ENCODE measurements at regions of chr11 and their contacts with region 1.

Region 1: GRCh38 chr11:17978553-17979287 is 34.1 kb downstream of the SERGEF start:
- DNase-seq: no peak
- H3K4me3 ChIP-seq: no peak overlapping the region
- H3K27ac ChIP-seq: no peak overlapping the region
- H3K4me1 ChIP-seq: peaks cover 0 to 16% (median 0%) of the 10 kb centered on the region in 3 donors
- H3K27me3 ChIP-seq: no peaks in the 10 kb centered on the region
- CTCF ChIP-seq: peak; percentile 27 to 80 (median 57)
- POLR2A ChIP-seq: no peak

Region 2: DNA sequence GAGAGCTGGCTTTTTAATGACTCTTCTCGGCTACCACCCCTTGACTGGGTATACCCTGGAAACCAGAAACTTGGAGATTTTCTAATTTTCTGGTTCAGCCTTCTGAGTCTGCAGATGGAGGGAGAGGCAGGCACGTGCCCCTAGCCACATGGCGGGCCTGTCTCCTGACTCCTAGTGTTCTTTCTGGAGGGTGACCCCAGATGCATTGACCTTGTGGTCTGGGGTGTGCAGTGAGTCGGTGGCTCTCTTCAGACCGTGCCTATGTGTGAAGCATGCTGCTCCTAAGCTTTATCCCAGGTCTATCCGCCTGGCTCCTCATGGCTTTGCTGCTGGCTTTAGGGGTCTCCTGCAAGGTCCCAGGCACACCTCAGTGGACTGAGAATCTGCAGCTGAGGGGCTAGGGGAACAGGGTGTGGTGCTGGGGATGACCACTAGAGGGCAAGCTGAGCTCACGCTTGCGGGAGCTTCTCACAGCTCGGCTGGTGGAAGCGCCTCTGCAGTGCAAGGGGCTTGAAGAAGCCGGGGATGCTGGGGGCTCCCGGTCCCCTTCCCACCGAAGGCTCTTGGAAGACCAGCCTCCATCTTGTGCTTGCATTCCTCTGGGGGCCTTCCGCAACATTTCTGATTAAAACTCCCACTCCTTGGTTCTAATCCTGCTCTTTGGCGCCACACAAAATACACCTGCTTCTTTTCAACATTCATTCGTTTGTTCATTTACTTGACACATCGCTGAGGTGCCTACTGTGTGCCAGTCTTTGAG is 379.8 kb before region 1 on chr11:
- intact Hi-C with region 1: loop called (anchors 5 kb)
- DNase-seq: no peak
- H3K4me3 ChIP-seq: no peak overlapping the region
- H3K27ac ChIP-seq: no peak overlapping the region
- H3K4me1 ChIP-seq: no peaks in the 10 kb centered on the region
- H3K27me3 ChIP-seq: peaks cover 0 to 42% (median 0%) of the 10 kb centered on the region in 4 donors
- CTCF ChIP-seq: peak; percentile 70 to 91 (median 80)
- POLR2A ChIP-seq: no peak

Region 3: GRCh38 chr11:17730608-17731462 is 247.9 kb before region 1 on chr11:
- intact Hi-C with region 1: loop called (anchors 5 kb)
- DNase-seq: no peak
- H3K4me3 ChIP-seq: no peak overlapping the region
- H3K27ac ChIP-seq: no peak overlapping the region
- H3K4me1 ChIP-seq: peaks cover 9 to 27% (median 17%) of the 10 kb centered on the region in 3 donors
- H3K27me3 ChIP-seq: peaks cover 2 to 67% (median 4%) of the 10 kb centered on the region in 4 donors
- CTCF ChIP-seq: peak; percentile 61 to 89 (median 81)
- POLR2A ChIP-seq: no peak

Region 4: DNA sequence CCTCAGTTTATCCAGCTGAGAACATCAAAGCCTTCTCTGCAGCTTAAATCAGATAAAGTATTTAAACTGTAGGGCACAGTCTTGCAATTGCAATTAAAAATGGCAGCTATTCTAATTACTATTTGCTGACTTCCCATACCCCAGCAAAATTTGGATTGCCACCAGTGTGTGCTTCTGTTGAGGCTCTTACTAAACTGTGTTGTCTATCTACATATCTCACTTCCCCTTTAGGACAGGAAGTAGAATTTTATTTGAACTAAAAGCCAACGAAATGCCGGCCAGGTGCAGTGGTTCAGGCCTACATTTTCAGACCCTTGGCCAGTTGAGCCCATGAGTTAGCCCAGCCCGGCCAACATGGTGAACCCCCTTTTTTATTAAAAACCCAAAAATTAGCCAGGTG is 250.8 kb after region 1 on chr11:
- intact Hi-C with region 1: no loop called
- DNase-seq: no peak
- H3K4me3 ChIP-seq: no peak overlapping the region
- H3K27ac ChIP-seq: no peak overlapping the region
- H3K4me1 ChIP-seq: no peaks in the 10 kb centered on the region
- H3K27me3 ChIP-seq: no peaks in the 10 kb centered on the region
- CTCF ChIP-seq: no peak
- POLR2A ChIP-seq: no peak

Region 5: DNA sequence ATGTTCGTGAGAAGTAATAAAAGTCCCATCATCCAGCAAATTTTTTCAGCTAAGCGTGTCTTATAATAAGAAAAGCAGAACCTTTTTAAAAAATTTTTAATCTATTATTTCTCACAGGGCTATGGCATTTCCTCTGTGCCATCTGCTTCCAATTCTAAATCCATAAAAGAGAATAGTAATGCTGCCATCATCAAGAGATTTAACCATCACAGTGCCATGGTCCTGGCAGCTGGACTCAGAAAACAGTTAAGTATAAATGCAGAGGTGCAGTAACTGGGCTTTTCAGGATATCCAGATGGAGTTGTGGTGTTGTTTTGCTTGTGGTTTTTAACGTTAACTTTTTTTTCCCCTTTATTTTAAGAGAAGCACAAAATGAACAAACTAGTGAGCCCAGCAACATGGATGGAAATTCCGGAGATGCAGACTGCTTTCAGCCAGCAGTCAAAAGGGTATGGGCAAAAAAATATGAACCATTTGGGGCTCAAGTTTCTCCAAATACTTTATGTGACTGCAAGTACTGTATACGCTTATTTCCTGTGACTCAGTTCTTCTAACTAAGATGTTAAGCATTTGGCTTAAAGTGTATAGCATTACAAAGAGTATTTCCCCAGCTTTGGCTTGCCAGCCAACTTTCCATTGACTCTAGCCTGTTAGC is 368.9 kb after region 1 on chr11:
- intact Hi-C with region 1: no loop called
- DNase-seq: no peak
- H3K4me3 ChIP-seq: no peak overlapping the region
- H3K27ac ChIP-seq: no peak overlapping the region
- H3K4me1 ChIP-seq: no peaks in the 10 kb centered on the region
- H3K27me3 ChIP-seq: no peaks in the 10 kb centered on the region
- CTCF ChIP-seq: no peak
- POLR2A ChIP-seq: no peak